ENCODE measurements at regions of chr19 and their contacts with region 1.

Region 1: DNA sequence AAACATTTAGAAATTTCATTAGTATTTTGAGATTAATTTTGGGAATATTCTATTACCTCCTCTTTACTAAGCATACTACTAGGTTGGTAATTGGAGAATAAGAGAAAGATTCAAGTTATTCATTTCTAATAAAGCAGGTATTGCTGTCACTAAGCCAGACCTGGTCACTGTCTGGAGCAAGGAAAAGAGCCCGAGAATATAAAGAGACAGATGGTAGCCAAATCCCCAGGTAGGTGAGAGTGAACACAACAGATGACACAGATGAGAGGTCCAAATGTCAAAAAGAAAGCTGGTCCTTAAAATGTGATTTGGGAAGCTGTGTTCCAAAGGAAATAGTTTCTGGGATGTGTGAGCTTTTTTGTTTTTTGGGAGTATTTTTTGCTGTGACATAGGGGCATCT is 128.6 kb downstream of the ZNF100 start:
- DNase-seq: no peak
- H3K4me3 ChIP-seq: no peak overlapping the region
- H3K27ac ChIP-seq: no peak overlapping the region
- H3K4me1 ChIP-seq: no peaks in the 10 kb centered on the region
- H3K27me3 ChIP-seq: no peaks in the 10 kb centered on the region
- CTCF ChIP-seq: no peak

Region 2: DNA sequence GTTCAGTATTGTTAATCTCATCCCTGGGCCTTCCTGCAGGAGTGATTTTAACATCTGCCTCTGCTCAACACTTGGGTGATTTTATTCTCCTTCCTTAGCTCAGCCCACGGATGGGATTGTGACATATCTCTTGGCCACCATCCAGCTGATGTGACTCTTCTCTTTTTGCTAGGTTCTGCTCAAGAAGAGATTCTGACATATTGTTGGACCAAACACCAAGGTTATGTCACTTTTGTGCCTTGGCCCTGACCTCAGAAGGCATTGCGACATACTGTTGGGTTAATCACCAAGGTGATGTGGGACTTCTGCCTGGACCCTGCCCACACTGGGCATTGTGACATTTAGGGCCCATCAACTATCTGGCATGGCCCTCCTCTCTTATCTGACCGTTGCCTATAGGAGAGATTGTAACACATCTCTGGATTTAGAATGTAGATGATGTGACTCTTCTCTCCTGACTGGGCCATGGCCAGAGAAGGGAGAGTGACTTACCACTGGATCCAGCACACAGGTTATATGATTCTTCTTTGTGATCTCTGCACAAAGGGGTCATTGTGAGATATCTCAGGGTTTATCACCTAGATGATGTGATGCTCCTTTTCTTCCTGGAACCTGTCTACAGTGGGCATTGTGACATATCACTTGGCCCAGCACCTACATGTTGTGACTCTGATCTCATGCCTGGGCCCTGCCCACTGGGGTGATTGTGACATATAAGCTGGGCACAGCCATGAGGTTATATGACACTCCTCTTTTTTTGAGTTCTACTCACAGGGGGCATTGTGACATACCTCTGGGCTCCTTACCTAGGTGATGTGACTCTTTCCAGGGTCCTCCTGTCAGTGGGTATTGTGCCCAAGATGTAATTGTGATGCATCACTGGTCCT is 44.6 kb before region 1 on chr19:
- CTCF ChIA-PET with region 1: no interaction called
- POLR2A ChIA-PET with region 1: no interaction called
- intact Hi-C with region 1: no loop called
- DNase-seq: no peak
- H3K4me3 ChIP-seq: no peak overlapping the region
- H3K27ac ChIP-seq: no peak overlapping the region
- H3K4me1 ChIP-seq: no peaks in the 10 kb centered on the region
- H3K27me3 ChIP-seq: no peaks in the 10 kb centered on the region
- CTCF ChIP-seq: no peak

Region 3: DNA sequence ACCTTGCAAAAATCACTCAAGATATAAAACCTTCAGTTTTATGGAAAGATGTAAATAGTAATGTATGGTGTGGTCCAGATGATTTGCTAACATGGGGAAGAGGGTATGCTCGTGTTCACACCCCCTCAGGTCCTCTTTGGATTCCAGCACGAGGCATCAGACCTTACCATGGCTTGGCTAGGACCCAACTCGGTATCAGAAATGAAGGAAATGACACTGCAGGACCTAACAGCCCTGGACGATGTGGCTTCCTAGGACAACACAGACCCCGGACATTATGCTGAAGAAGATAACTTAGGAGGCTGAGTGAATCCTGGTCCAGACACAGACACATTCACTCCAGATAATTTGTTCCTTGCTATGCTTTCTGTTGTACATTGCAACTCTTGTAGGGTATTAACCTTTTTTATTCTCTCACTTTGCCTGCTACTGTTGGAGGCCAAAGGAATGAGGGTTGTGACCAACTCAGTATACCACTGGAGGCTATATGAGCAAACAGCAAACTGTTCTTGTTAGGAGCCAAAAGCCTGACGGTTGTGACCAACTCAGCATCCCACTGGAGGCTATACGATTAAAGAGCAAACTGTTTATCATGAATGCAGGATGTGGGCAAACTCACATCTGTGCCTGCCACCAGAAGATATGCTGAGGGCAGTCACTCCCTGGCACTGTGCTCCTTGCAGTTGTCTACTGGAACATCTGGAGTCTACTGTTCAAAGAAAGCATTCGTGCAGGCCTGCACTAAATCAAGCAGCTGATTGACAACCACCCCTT is 11.7 kb before region 1 on chr19:
- CTCF ChIA-PET with region 1: no interaction called
- POLR2A ChIA-PET with region 1: no interaction called
- intact Hi-C with region 1: no loop called
- DNase-seq: no peak
- H3K4me3 ChIP-seq: no peak overlapping the region
- H3K27ac ChIP-seq: no peak overlapping the region
- H3K4me1 ChIP-seq: no peaks in the 10 kb centered on the region
- H3K27me3 ChIP-seq: no peaks in the 10 kb centered on the region
- CTCF ChIP-seq: no peak

Region 4: DNA sequence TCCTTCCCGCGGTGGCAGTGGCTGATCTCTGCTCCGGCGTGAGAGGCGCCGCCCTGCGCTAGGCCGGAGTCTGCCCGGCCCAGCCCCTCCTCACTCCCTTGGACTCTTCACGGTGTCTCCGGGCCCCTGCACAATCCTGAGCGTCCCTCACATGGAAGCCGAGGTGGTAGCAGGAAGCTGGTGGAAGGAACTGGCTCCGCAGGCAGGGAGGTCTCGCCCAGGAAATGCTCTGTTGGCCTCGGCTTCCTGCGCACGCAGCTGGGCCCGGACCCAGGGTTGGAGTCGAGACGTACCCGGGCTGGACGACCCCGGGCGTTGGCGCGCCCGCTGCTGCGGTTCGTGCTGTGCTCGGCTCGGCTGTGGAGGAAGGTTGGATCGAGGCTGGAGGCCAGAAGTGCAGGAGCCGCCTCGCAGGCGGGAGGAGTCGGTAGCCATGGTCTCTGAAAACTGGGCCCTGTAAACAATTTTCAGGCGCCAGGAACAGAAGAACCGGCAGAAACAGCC is 1565.1 kb after region 1 on chr19:
- CTCF ChIA-PET with region 1: no interaction called
- POLR2A ChIA-PET with region 1: interaction called, 10 read pairs
- intact Hi-C with region 1: no loop called
- DNase-seq: no peak
- H3K4me3 ChIP-seq: no peak overlapping the region
- H3K27ac ChIP-seq: no peak overlapping the region
- H3K4me1 ChIP-seq: no peaks in the 10 kb centered on the region
- H3K27me3 ChIP-seq: no peaks in the 10 kb centered on the region
- CTCF ChIP-seq: no peak

Measured in PC-9 (cell line).